Activated CD4-positive, alpha-beta T cell treated with anti-CD3 and anti-CD28 coated beads for 36 hours (primary cell): ENCODE measurements at regions of chr9 and their contacts with region 1.

Region 1: DNA sequence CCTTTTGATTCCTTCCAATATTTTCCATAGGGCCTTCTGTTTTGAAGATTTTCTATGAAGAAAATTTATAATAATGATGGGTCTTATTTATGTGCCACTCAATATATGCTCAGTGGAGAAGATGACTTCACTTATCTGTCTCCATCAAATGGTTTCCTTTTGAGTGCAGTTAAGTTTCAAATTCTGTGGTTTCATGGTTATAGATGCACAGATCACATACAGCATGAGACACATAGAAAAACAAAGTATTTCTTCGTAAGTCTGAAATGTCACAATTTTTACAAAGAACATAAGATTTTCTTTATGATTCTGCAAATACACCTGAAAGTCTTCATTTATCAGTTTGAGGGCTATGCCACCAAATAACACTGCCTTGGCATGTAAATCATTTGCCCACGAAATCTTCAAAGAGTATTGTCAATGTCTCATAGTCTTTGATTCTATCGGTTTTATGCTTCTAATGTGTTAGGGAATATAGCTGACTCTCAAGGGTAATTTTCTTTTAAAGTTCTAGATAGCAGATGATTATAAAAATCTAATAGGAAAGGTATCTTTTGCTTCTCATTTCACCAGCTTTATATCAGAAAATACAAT is 14.1 kb downstream of the CFAP95 start:
- DNase-seq: no peak
- ATAC-seq: peak; percentile 91
- H3K4me3 Mint-ChIP-seq: no peak overlapping the region
- H3K27ac Mint-ChIP-seq: peak overlapping the region; percentile 20
- H3K4me1 Mint-ChIP-seq: peaks cover 41% of the 10 kb centered on the region
- H3K27me3 Mint-ChIP-seq: no peaks in the 10 kb centered on the region

Region 2: GRCh38 chr9:69798744-69799143 is 35.9 kb before region 1 on chr9:
- CTCF ChIA-PET with region 1: no interaction called
- POLR2A ChIA-PET with region 1: no interaction called
- intact Hi-C with region 1: no loop called
- DNase-seq: no peak
- ATAC-seq: no peak
- H3K4me3 Mint-ChIP-seq: no peak overlapping the region
- H3K27ac Mint-ChIP-seq: no peak overlapping the region
- H3K4me1 Mint-ChIP-seq: no peaks in the 10 kb centered on the region
- H3K27me3 Mint-ChIP-seq: peaks cover 7% of the 10 kb centered on the region

Region 3: GRCh38 chr9:69809304-69809863 is 25.3 kb before region 1 on chr9:
- CTCF ChIA-PET with region 1: interaction called, 4 read pairs
- POLR2A ChIA-PET with region 1: no interaction called
- intact Hi-C with region 1: loop called in 1 of 2 experiments (anchors 1 kb)
- DNase-seq: peak; percentile 55
- ATAC-seq: peak; percentile 65
- H3K4me3 Mint-ChIP-seq: no peak overlapping the region
- H3K27ac Mint-ChIP-seq: no peak overlapping the region
- H3K4me1 Mint-ChIP-seq: peaks cover 4% of the 10 kb centered on the region
- H3K27me3 Mint-ChIP-seq: peaks cover 2% of the 10 kb centered on the region

Region 4: GRCh38 chr9:69822091-69822750 is 12.5 kb before region 1 on chr9:
- CTCF ChIA-PET with region 1: interaction called, 6 read pairs
- POLR2A ChIA-PET with region 1: no interaction called
- intact Hi-C with region 1: loop called in 1 of 2 experiments (anchors 2 kb)
- DNase-seq: no peak
- ATAC-seq: peak; percentile 82
- H3K4me3 Mint-ChIP-seq: no peak overlapping the region
- H3K27ac Mint-ChIP-seq: no peak overlapping the region
- H3K4me1 Mint-ChIP-seq: peaks cover 26% of the 10 kb centered on the region
- H3K27me3 Mint-ChIP-seq: peaks cover 26% of the 10 kb centered on the region

Region 5: GRCh38 chr9:69898714-69899209 is 64.1 kb after region 1 on chr9:
- CTCF ChIA-PET with region 1: no interaction called
- POLR2A ChIA-PET with region 1: no interaction called
- intact Hi-C with region 1: loop called in 1 of 2 experiments (anchors 2 kb)
- DNase-seq: no peak
- ATAC-seq: peak; percentile 96
- H3K4me3 Mint-ChIP-seq: no peak overlapping the region
- H3K27ac Mint-ChIP-seq: peak overlapping the region; percentile 8
- H3K4me1 Mint-ChIP-seq: peaks cover 16% of the 10 kb centered on the region
- H3K27me3 Mint-ChIP-seq: peaks cover 7% of the 10 kb centered on the region